ENCODE measurements at regions of chr10 and their contacts with region 1.

Region 1: GRCh38 chr10:117653170-117653515 is 110.6 kb downstream of the EMX2 start:
- DNase-seq: peak; percentile 65
- H3K4me3 Mint-ChIP-seq: peak overlapping the region; percentile 11
- H3K27ac Mint-ChIP-seq: peak overlapping the region; percentile 83
- H3K4me1 Mint-ChIP-seq: peaks cover 38% of the 10 kb centered on the region
- H3K27me3 Mint-ChIP-seq: peaks cover 3% of the 10 kb centered on the region

Region 2: DNA sequence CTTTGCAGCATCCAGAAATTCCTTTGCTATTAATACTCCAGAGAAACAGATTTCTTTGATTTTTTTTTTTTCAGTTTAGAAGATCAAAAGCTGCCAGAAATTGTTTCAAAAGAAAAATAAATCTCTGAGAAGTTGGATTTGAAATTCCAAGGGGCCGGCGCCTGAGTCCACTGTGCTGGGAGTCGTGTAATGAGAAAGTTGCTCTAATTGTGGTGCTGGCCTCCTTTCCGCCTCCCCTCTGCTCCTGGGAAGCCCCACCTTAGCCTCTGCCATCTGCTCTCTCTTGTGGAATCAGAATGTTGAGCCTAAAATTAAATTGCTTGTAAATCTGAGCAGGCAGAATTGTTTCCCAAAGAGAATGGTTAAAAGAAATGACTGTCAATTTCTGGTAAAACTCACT is 17.3 kb before region 1 on chr10:
- intact Hi-C with region 1: loop called (anchors 1 kb)
- DNase-seq: no peak
- H3K4me3 Mint-ChIP-seq: no peak overlapping the region
- H3K27ac Mint-ChIP-seq: no peak overlapping the region
- H3K4me1 Mint-ChIP-seq: no peaks in the 10 kb centered on the region
- H3K27me3 Mint-ChIP-seq: peaks cover 37% of the 10 kb centered on the region

Region 3: DNA sequence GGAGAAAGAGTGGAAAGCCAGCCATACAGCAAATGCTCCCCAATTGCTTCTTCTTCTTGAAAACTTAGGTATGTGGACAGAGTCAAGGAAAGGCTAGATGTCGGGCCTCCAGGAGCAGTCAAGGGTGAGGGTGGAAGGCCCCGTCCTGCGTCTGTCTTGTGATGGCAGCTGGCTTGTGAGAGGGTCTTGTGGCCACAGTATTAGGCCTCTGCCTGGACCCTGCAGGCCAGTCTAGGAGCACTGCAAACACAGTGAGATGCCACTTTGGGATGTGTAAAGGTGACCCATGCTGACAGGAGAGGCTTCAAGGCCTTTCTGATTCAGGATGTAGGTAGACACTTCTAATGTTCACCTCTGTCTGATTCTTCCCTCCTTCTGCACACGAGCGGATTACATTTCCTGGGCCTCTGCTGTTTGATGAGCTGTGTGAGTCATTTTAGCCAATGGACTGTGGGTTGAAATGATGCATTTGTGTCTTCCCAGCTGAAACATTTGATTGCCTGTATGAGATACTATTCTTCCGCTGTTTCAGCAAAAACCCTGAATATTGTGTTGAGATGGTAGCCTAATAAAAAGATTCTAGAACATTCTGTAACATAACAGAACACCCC is 24.9 kb after region 1 on chr10:
- intact Hi-C with region 1: loop called (anchors 2 kb)
- DNase-seq: no peak
- H3K4me3 Mint-ChIP-seq: no peak overlapping the region
- H3K27ac Mint-ChIP-seq: no peak overlapping the region
- H3K4me1 Mint-ChIP-seq: peaks cover 8% of the 10 kb centered on the region
- H3K27me3 Mint-ChIP-seq: peaks cover 13% of the 10 kb centered on the region

Region 4: GRCh38 chr10:118046395-118047156 is 393.4 kb after region 1 on chr10 and contains the start of gene RAB11FIP2:
- intact Hi-C with region 1: loop called (anchors 5 kb)
- DNase-seq: peak; percentile 91
- H3K4me3 Mint-ChIP-seq: peak within 1 kb of the TSS; percentile 92
- H3K27ac Mint-ChIP-seq: peak within 1 kb of the TSS; percentile 83
- H3K4me1 Mint-ChIP-seq: peaks cover 30% of the 10 kb centered on the region
- H3K27me3 Mint-ChIP-seq: peaks cover 13% of the 10 kb centered on the region
- total RNA-seq, gene RAB11FIP2: 13.0 and 13.1 TPM in 2 replicates